ENCODE measurements at regions of chr11 and their contacts with region 1.

Region 1: GRCh38 chr11:73800276-73800806 is 12.7 kb downstream of the MRPL48 start:
- DNase-seq: no peak
- ATAC-seq: peak in 3 of 4 donors; percentile 37 to 70 (median 68)
- H3K4me3 ChIP-seq: no peak overlapping the region
- H3K27ac ChIP-seq: no peak overlapping the region
- H3K4me1 ChIP-seq: peaks cover 0 to 8% (median 0%) of the 10 kb centered on the region in 12 donors
- H3K27me3 ChIP-seq: no peaks in the 10 kb centered on the region
- CTCF ChIP-seq: no peak
- POLR2A ChIP-seq: no peak

Region 2: DNA sequence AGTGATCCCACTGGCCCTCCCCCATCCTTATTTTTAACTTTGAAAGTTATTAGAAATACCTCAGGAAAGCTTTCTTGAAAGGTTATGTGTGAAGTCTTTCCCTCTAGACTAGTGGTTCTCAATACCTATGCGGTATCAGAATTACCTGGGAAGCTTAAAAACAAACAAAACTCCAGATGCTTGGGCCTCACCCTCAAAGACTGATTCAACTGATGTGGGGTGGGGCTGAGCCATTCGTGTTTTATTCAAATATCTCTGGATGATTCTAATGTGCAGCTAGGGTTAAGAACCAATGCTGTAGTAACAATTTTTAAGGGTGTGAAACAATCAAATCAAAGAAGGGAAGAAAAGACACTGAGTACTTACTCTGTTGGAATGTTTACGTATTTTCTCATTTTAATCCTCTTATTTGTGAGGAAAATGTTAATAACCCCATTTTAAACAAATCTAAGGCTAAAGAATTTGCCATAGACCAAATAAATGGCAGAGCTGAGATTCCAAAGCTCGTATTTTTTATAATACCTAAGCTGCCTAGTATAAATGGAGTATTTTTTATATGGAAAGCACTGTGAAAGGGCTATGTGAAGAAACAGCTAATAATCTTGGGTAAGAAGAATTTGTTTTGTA is 106.3 kb before region 1 on chr11:
- intact Hi-C with region 1: no loop called
- DNase-seq: no peak
- ATAC-seq: no peak
- H3K4me3 ChIP-seq: no peak overlapping the region
- H3K27ac ChIP-seq: no peak overlapping the region
- H3K4me1 ChIP-seq: no peaks in the 10 kb centered on the region
- H3K27me3 ChIP-seq: no peaks in the 10 kb centered on the region
- CTCF ChIP-seq: no peak
- POLR2A ChIP-seq: no peak

Region 3: GRCh38 chr11:73705053-73705452 is 95.3 kb before region 1 on chr11:
- intact Hi-C with region 1: loop called in 1 of 10 experiments (anchors 10 kb)
- DNase-seq: no peak
- ATAC-seq: no peak
- H3K4me3 ChIP-seq: no peak overlapping the region
- H3K27ac ChIP-seq: no peak overlapping the region
- H3K4me1 ChIP-seq: no peaks in the 10 kb centered on the region
- H3K27me3 ChIP-seq: no peaks in the 10 kb centered on the region
- CTCF ChIP-seq: no peak
- POLR2A ChIP-seq: no peak

Region 4: DNA sequence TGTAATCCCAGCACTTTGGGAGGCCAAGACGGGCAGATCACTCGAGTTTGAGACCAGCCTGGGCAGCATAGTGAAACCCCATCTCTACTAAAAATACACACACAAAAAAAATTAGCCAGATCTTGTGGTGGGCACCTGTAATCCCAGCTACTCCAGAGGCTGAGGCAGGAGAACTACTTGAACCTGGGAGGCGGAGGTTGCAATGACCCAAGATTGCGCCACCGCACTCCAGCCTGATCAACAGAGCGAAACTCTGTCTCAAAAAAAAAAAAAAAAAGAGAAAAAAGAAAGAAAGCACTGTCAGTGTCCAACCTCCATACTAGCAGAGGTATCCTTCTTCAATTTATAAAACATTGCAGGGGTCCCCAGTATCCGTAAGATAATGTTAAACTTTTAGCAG is 57.3 kb before region 1 on chr11:
- intact Hi-C with region 1: loop called in 1 of 10 experiments (anchors 10 kb)
- DNase-seq: no peak
- ATAC-seq: no peak
- H3K4me3 ChIP-seq: no peak overlapping the region
- H3K27ac ChIP-seq: no peak overlapping the region
- H3K4me1 ChIP-seq: peaks cover 0 to 11% (median 1%) of the 10 kb centered on the region in 12 donors
- H3K27me3 ChIP-seq: no peaks in the 10 kb centered on the region
- CTCF ChIP-seq: no peak
- POLR2A ChIP-seq: no peak

Region 5: DNA sequence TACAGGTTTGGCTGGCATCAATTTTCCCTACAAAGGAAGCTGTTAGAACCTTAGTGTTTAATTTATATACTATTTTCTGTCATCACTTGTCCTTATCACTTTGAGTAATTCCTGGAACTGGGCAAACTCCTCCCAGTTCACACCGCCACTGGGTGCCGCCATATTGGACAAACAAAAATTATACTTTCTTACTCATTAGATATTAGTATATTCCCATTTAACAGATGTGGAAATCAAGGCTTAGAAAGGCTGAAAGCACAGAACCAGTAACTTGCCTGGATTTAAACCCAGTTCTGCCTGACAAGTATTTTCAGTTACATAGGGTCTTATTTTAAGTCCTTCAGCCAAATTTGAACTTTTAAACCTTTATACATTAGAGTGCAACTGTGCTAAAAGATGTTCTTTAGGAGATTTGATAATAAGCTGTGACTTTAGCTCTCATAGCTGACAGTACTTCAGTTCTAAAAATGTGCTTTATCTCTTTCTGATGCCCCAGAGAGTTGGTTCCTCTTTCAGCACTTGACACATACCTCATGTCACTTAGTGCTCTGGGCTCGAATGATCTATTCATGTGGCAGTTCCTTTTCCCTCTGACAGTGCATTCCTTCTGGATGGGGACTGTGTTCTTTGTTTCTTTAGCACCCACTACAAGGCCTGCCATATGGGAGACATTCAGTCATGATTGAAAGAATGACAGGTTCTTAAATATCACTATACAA is 50.9 kb after region 1 on chr11:
- intact Hi-C with region 1: no loop called
- DNase-seq: no peak
- ATAC-seq: peak; percentile 71 to 82 (median 72)
- H3K4me3 ChIP-seq: no peak overlapping the region
- H3K27ac ChIP-seq: peak overlapping the region in 5 of 12 donors; percentile 15 to 68 (median 33)
- H3K4me1 ChIP-seq: peaks cover 0 to 21% (median 1%) of the 10 kb centered on the region in 12 donors
- H3K27me3 ChIP-seq: no peaks in the 10 kb centered on the region
- CTCF ChIP-seq: no peak
- POLR2A ChIP-seq: no peak